HepG2 (cell line): ENCODE measurements at regions of chr14 and their contacts with region 1.

Region 1: DNA sequence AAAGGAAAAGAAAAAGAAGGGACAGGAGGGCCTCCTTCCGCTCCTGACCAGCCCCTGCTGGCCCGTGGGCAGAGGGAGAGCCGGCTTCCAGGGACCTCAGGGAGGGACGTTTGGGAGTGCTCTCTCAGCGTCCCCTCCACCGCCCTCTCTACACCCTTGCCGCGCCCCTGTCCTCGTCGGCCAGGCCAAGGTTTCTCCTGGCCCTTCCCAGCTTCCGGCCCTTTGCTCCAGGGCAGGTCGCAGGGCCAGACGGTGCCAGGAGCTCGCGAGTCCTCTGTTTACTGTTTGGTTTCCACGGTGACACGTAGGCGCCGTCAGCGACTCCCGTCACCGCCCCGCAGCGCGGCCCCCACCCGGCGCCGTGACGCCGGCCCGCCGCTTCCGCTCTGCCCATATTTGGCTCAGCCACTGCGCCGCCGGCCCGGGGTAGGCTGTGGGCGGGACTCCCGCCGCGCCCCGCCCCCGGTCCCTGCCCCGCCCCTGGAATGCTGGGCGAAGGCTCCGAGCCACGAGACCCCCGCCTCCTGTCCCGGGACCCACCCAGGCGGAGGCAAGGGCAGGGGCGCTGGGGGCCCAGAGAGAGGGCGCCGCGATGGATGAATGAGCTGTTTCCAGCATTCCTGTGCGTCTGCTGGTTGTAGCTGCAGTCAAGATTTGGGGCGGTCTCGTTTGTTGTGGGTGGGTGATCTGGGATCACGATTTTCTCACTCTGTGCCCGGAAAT is 15.5 kb downstream of the FOS start:
- DNase-seq: peak; percentile 91
- ATAC-seq: peak; percentile 92
- H3K4me3 ChIP-seq: peak overlapping the region; percentile 72 to 83 (median 73)
- H3K27ac ChIP-seq: peak overlapping the region; percentile 96
- H3K4me1 ChIP-seq: peaks cover 67% of the 10 kb centered on the region
- H3K27me3 ChIP-seq: peaks cover 1 to 6% of the 10 kb centered on the region in 2 experiments; a peak in 2 of 5 replicates
- CTCF ChIP-seq: no peak
- EP300 ChIP-seq: peak in 1 of 2 experiments; percentile 79; a peak in 3 of 4 replicates
- POLR2A ChIP-seq: peak; percentile 71 to 91
- RAD21 ChIP-seq: no peak

Region 2: GRCh38 chr14:74684434-74684833 is 609.6 kb before region 1 on chr14:
- CTCF ChIA-PET with region 1: no interaction called
- POLR2A ChIA-PET with region 1: no interaction called
- in situ Hi-C with region 1: no loop called
- intact Hi-C with region 1: no loop called
- DNase-seq: no peak
- ATAC-seq: no peak
- H3K4me3 ChIP-seq: no peak overlapping the region
- H3K27ac ChIP-seq: no peak overlapping the region
- H3K4me1 ChIP-seq: peaks cover 12% of the 10 kb centered on the region
- H3K27me3 ChIP-seq: no peaks in the 10 kb centered on the region
- CTCF ChIP-seq: no peak
- EP300 ChIP-seq: no peak
- POLR2A ChIP-seq: no peak
- RAD21 ChIP-seq: no peak

Region 3: GRCh38 chr14:75126679-75127473 is 167.2 kb before region 1 on chr14 and contains the start of gene NEK9:
- CTCF ChIA-PET with region 1: interaction called, 24 read pairs
- POLR2A ChIA-PET with region 1: interaction called, 14 read pairs
- in situ Hi-C with region 1: loop called (anchors 5 kb)
- intact Hi-C with region 1: loop called (anchors 1 kb)
- DNase-seq: peak; percentile 73
- ATAC-seq: peak; percentile 96
- H3K4me3 ChIP-seq: peak within 1 kb of the TSS; percentile 83 to 90 (median 84)
- H3K27ac ChIP-seq: peak within 1 kb of the TSS; percentile 95
- H3K4me1 ChIP-seq: peaks cover 26% of the 10 kb centered on the region
- H3K27me3 ChIP-seq: no peaks in the 10 kb centered on the region; a peak in 1 of 5 replicates
- CTCF ChIP-seq: no peak
- EP300 ChIP-seq: no peak
- POLR2A ChIP-seq: peak; percentile 90 to 93
- RAD21 ChIP-seq: peak; percentile 43
- total RNA-seq, gene NEK9: 16.5 and 29.4 TPM in 2 replicates

Region 4: DNA sequence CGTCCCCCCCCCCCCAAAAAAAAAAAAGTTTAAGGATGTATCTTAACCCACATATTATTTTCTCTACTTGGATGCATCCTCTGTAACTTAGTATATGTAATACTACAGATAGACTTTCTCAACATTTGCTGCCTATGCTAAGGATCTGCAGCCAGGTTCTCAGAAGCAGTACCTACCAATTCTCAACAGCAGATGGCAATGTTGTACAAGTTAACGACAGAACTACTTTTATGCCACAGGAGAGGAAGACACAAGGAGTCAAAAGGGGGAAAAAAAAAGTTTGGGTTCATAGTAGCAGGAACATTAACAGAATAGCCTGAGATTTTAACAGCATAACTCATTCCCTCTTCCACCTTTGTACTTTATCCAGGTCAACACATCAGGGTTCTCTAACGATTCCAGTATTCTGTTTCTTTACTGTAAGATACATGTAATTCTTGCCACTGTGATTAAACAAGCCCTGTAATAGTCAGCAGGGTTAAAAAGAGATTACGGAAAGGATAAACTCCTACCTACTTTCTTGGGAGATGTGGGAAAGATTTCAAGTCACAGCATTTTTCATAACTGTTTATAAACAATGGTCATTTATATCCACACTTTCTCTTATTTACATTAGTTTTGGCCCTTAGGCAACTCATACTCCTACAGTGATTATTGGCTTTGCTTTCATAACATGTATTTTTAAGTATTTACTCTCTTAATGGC is 161.5 kb before region 1 on chr14:
- CTCF ChIA-PET with region 1: interaction called, 24 read pairs
- POLR2A ChIA-PET with region 1: interaction called, 14 read pairs
- in situ Hi-C with region 1: loop called (anchors 5 kb)
- intact Hi-C with region 1: loop called (anchors 1 kb)
- DNase-seq: peak; percentile 69
- ATAC-seq: peak; percentile 77
- H3K4me3 ChIP-seq: no peak overlapping the region
- H3K27ac ChIP-seq: no peak overlapping the region
- H3K4me1 ChIP-seq: peaks cover 13% of the 10 kb centered on the region
- H3K27me3 ChIP-seq: no peaks in the 10 kb centered on the region
- CTCF ChIP-seq: peak; percentile 83
- EP300 ChIP-seq: no peak
- POLR2A ChIP-seq: no peak
- RAD21 ChIP-seq: peak; percentile 62; the same call in 1 of the 2 replicates

Region 5: DNA sequence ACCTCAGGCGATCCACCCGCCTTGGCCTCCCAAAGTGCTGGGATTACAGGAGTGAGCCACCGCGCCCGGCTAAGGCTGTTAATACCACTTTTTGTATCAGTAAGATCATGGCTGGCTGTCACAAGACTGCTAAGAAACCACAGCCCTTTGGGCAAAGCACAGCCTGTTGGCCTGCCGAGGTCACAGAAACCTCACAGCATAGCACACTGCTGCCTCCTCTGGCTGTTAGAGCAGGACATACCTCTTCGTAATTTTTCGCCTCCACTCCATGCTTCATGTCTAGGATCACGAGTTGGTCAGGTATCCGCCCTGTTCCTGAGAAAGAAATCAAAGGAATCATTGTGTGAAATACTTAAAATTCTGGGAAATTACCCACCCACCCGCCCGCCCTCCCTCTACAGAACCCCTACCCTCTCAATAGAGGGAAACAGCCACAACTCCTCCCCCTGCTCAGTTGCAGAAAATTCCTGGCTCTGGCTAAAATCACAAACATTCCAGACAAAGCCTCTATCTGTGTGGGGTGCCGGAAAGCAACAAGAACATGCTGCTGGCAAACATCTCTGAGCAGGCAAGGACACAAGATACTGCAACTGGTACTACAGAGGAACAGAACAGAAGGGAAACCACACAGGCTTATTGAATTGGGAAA is 146.5 kb before region 1 on chr14:
- CTCF ChIA-PET with region 1: interaction called, 4 read pairs
- POLR2A ChIA-PET with region 1: interaction called, 3 read pairs
- in situ Hi-C with region 1: no loop called
- intact Hi-C with region 1: loop called (anchors 2 kb)
- DNase-seq: peak; percentile 97
- ATAC-seq: peak; percentile 98
- H3K4me3 ChIP-seq: peak overlapping the region in 1 of 3 experiments; percentile 3; a peak in 1 of 6 replicates
- H3K27ac ChIP-seq: peak overlapping the region; percentile 75
- H3K4me1 ChIP-seq: peaks cover 75% of the 10 kb centered on the region
- H3K27me3 ChIP-seq: no peaks in the 10 kb centered on the region
- CTCF ChIP-seq: peak; percentile 76
- EP300 ChIP-seq: 0 out of 4 replicates have a peak, but pooled peaks of 1 of the 2 experiments have one; percentile 39
- POLR2A ChIP-seq: peak in 1 of 2 experiments; percentile 42; a peak in 1 of 4 replicates
- RAD21 ChIP-seq: no peak

Region 6: GRCh38 chr14:75258615-75259466 is 35.2 kb before region 1 on chr14:
- CTCF ChIA-PET with region 1: no interaction called
- POLR2A ChIA-PET with region 1: interaction called, 7 read pairs
- in situ Hi-C with region 1: no loop called
- intact Hi-C with region 1: loop called (anchors 2 kb)
- DNase-seq: peak; percentile 96
- ATAC-seq: peak; percentile 90
- H3K4me3 ChIP-seq: peak overlapping the region; percentile 51 to 76 (median 62)
- H3K27ac ChIP-seq: peak overlapping the region; percentile 80
- H3K4me1 ChIP-seq: peaks cover 49% of the 10 kb centered on the region
- H3K27me3 ChIP-seq: peaks cover 0 to 18% of the 10 kb centered on the region in 2 experiments; a peak in 2 of 5 replicates
- CTCF ChIP-seq: peak; percentile 14; the same call in 1 of the 2 replicates
- EP300 ChIP-seq: peak; percentile 86 to 98
- POLR2A ChIP-seq: peak in 1 of 2 experiments; percentile 82; a peak in 2 of 4 replicates
- RAD21 ChIP-seq: no peak

Region 7: DNA sequence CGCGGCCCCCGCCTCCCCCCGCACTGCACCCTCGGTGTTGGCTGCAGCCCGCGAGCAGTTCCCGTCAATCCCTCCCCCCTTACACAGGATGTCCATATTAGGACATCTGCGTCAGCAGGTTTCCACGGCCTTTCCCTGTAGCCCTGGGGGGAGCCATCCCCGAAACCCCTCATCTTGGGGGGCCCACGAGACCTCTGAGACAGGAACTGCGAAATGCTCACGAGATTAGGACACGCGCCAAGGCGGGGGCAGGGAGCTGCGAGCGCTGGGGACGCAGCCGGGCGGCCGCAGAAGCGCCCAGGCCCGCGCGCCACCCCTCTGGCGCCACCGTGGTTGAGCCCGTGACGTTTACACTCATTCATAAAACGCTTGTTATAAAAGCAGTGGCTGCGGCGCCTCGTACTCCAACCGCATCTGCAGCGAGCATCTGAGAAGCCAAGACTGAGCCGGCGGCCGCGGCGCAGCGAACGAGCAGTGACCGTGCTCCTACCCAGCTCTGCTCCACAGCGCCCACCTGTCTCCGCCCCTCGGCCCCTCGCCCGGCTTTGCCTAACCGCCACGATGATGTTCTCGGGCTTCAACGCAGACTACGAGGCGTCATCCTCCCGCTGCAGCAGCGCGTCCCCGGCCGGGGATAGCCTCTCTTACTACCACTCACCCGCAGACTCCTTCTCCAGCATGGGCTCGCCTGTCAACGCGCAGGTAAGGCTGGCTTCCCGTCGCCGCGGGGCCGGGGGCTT is 15.5 kb before region 1 on chr14 and contains the start of gene FOS:
- CTCF ChIA-PET with region 1: no interaction called
- POLR2A ChIA-PET with region 1: interaction called, 17 read pairs
- in situ Hi-C with region 1: no loop called
- intact Hi-C with region 1: no loop called
- DNase-seq: peak; percentile 89
- ATAC-seq: peak; percentile 76
- H3K4me3 ChIP-seq: peak within 1 kb of the TSS; percentile 74 to 96 (median 84)
- H3K27ac ChIP-seq: peak within 1 kb of the TSS; percentile 87
- H3K4me1 ChIP-seq: peaks cover 53% of the 10 kb centered on the region
- H3K27me3 ChIP-seq: peaks cover 1 to 30% of the 10 kb centered on the region in 2 experiments; a peak in 3 of 5 replicates
- CTCF ChIP-seq: no peak; the same call in 1 of the 2 replicates
- EP300 ChIP-seq: no peak; a peak in 1 of 4 replicates
- POLR2A ChIP-seq: peak; percentile 99
- RAD21 ChIP-seq: peak; percentile 39; the same call in 1 of the 2 replicates
- total RNA-seq, gene FOS: 4.3 and 24.2 TPM in 2 replicates

Region 8: DNA sequence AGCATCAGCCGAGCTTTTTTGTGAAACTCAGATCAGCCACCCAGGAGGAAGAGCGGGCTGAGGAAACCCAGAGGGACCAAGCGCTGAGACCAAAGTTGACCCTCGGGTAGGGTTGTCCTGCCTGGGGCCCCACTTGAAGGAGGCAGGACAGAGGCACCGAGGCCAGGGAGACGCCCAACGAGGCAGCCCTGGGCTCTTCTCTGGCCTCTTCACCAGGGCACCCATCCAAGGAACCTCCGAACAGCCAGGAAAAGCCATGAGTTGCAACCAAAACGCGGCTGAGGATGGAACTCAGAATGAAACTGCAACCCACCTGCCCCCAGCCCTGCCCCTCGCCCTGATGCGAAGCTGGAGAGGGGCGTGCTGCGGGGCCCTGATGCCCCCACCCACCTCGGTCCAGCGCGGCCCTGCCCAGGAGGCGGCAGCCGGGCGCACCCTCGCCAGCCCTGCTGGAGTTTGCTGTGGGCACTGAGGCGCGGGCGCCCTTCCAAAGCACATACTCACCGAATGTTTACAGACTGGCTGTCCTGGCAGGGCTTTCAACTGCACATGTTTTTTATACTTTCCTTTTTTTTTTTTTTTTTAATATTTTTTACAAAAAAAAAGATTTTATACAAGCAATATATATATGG is 175.6 kb after region 1 on chr14:
- CTCF ChIA-PET with region 1: no interaction called
- POLR2A ChIA-PET with region 1: no interaction called
- in situ Hi-C with region 1: no loop called
- intact Hi-C with region 1: no loop called
- DNase-seq: no peak
- ATAC-seq: no peak
- H3K4me3 ChIP-seq: no peak overlapping the region
- H3K27ac ChIP-seq: no peak overlapping the region
- H3K4me1 ChIP-seq: no peaks in the 10 kb centered on the region
- H3K27me3 ChIP-seq: no peaks in the 10 kb centered on the region
- CTCF ChIP-seq: no peak
- EP300 ChIP-seq: no peak
- POLR2A ChIP-seq: no peak
- RAD21 ChIP-seq: no peak